Activated naive CD4-positive, alpha-beta T cell treated with anti-CD3 and anti-CD28 coated beads, Interleukin-2, amount 10 ng/mL, durations not matched to agents 7 days and 5 days (primary cell): ENCODE measurements at regions of chr2 and their contacts with region 1.

Region 1: GRCh38 chr2:74587664-74588277 is 33.3 kb downstream of the DOK1 start:
- DNase-seq: peak; percentile 78
- H3K4me3 Mint-ChIP-seq: no peak overlapping the region
- H3K27ac Mint-ChIP-seq: no peak overlapping the region
- H3K4me1 Mint-ChIP-seq: peaks cover 32% of the 10 kb centered on the region
- H3K27me3 Mint-ChIP-seq: peaks cover 16% of the 10 kb centered on the region

Region 2: GRCh38 chr2:74212702-74213410 is 374.9 kb before region 1 on chr2:
- CTCF ChIA-PET with region 1: no interaction called
- DNase-seq: no peak
- H3K4me3 Mint-ChIP-seq: no peak overlapping the region
- H3K27ac Mint-ChIP-seq: no peak overlapping the region
- H3K4me1 Mint-ChIP-seq: peaks cover 13% of the 10 kb centered on the region
- H3K27me3 Mint-ChIP-seq: no peaks in the 10 kb centered on the region

Region 3: GRCh38 chr2:74250189-74250631 is 337.6 kb before region 1 on chr2:
- CTCF ChIA-PET with region 1: interaction called, 10 read pairs
- DNase-seq: peak; percentile 74
- H3K4me3 Mint-ChIP-seq: no peak overlapping the region
- H3K27ac Mint-ChIP-seq: peak overlapping the region; percentile 60
- H3K4me1 Mint-ChIP-seq: peaks cover 3% of the 10 kb centered on the region
- H3K27me3 Mint-ChIP-seq: peaks cover 4% of the 10 kb centered on the region

Region 4: GRCh38 chr2:74482801-74483674 is 104.7 kb before region 1 on chr2 and contains the starts of genes CCDC142 and TTC31:
- CTCF ChIA-PET with region 1: interaction called, 81 read pairs
- DNase-seq: peak; percentile 96
- H3K4me3 Mint-ChIP-seq: peak within 1 kb of the TSS; percentile 100
- H3K27ac Mint-ChIP-seq: peak within 1 kb of the TSS; percentile 98
- H3K4me1 Mint-ChIP-seq: peaks cover 51% of the 10 kb centered on the region
- H3K27me3 Mint-ChIP-seq: no peaks in the 10 kb centered on the region

Region 5: GRCh38 chr2:74493546-74493945 is 94.2 kb before region 1 on chr2:
- CTCF ChIA-PET with region 1: no interaction called
- DNase-seq: no peak
- H3K4me3 Mint-ChIP-seq: no peak overlapping the region
- H3K27ac Mint-ChIP-seq: no peak overlapping the region
- H3K4me1 Mint-ChIP-seq: peaks cover 12% of the 10 kb centered on the region
- H3K27me3 Mint-ChIP-seq: peaks cover 27% of the 10 kb centered on the region

Region 6: GRCh38 chr2:74529357-74530238 is 58.2 kb before region 1 on chr2 and contains the starts of genes AUP1 and HTRA2:
- CTCF ChIA-PET with region 1: interaction called, 104 read pairs
- DNase-seq: peak; percentile 94
- H3K4me3 Mint-ChIP-seq: peak within 1 kb of the TSS; percentile 96
- H3K27ac Mint-ChIP-seq: peak within 1 kb of the TSS; percentile 94
- H3K4me1 Mint-ChIP-seq: peaks cover 51% of the 10 kb centered on the region
- H3K27me3 Mint-ChIP-seq: no peaks in the 10 kb centered on the region

Region 7: DNA sequence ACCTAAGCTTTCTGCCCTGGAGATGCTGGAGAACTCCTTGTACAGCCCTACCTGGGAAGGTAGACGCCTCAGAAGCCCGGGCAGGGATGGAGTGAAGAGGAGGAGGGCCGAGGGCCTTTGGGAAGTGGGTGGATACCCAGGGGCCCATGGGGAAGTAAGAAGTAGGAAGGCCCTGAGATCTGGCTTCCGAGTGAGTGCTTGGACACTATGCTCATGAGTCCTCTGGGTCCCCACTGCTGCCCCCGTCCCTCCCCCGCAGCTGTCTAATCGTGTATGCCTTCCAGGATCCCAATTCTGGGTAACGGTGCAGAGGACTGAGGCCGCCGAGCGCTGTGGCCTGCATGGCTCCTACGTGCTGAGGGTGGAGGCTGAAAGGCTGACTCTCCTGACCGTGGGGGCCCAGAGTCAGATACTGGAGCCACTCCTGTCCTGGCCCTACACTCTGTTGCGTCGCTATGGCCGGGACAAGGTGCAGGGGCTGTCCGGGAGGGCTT is 32.1 kb before region 1 on chr2:
- CTCF ChIA-PET with region 1: interaction called, 11 read pairs
- DNase-seq: no peak
- H3K4me3 Mint-ChIP-seq: peak overlapping the region; percentile 94
- H3K27ac Mint-ChIP-seq: peak overlapping the region; percentile 89
- H3K4me1 Mint-ChIP-seq: peaks cover 33% of the 10 kb centered on the region
- H3K27me3 Mint-ChIP-seq: peaks cover 44% of the 10 kb centered on the region

Region 8: DNA sequence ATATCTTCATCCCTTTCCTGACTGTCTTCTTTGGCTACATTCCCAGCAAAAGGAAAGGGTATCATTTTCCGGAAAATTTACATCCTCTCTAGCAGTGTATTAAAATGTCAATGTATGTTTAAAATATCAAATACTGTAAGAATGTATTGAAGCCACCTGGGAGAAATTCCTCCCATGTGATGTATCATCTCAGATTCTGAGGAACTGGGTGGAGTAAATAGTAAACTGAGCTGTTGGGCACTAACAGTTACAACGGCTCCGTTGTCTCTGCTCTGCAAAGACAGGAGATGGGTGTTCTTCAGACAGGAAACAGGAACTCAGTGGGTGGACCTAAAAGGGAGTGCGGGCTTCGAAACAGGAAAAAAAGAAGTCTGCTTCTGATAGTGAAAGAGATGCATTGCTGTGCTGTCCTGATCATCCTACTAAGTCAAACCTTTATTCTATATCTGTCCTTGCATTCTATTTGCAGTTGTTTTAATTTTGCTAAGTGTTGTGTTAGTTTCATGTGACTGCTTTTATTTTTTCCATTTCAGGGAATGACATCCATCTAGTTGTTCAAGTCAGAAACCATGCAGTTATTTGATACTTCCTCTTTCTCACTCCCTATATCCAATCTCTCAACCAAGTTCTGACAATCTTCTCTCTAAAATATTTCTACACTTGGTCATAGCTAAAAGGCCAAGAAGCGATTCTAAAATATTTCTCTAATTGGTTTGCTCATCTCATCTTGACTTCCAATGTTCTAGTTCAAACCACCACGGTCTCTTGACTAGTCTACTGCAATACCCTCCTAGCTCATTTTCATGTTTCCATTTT is 13.8 kb before region 1 on chr2:
- CTCF ChIA-PET with region 1: interaction called, 62 read pairs
- DNase-seq: peak; percentile 54
- H3K4me3 Mint-ChIP-seq: peak overlapping the region; percentile 54
- H3K27ac Mint-ChIP-seq: peak overlapping the region; percentile 85
- H3K4me1 Mint-ChIP-seq: peaks cover 29% of the 10 kb centered on the region
- H3K27me3 Mint-ChIP-seq: no peaks in the 10 kb centered on the region

Region 9: DNA sequence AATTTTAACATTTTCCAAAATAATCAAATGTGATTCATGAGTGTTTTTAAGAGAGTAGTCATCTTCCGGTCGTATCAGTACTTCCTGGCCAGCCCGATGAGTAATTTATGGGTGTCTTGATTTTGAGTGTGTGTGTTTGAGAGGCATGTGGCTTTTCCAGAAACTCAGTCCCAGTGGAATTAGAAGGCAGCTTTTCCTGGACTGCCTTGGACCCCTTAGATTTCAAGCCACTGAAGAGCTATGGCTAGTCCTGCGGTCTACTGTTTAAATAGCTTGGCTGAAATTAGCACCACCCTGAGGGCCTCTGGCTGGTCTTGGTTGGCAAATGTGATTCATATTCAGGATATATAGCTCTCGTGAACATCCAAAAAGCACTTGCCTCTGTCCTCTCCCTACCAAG is 305.6 kb after region 1 on chr2:
- CTCF ChIA-PET with region 1: no interaction called
- DNase-seq: no peak
- H3K4me3 Mint-ChIP-seq: no peak overlapping the region
- H3K27ac Mint-ChIP-seq: no peak overlapping the region
- H3K4me1 Mint-ChIP-seq: no peaks in the 10 kb centered on the region
- H3K27me3 Mint-ChIP-seq: no peaks in the 10 kb centered on the region